ENCODE measurements at regions of chr2 and their contacts with region 1.

Region 1: GRCh38 chr2:216412022-216412999 is at the start of gene SMARCAL1:
- DNase-seq: peak; percentile 93 to 98 (median 97)
- ATAC-seq: peak; percentile 97
- H3K4me3 ChIP-seq: peak within 1 kb of the TSS; percentile 89
- H3K4me3 Mint-ChIP-seq: peak within 1 kb of the TSS; percentile 85 to 99 (median 98)
- H3K27ac ChIP-seq: peak within 1 kb of the TSS; percentile 83
- H3K27ac Mint-ChIP-seq: peak within 1 kb of the TSS; percentile 86 to 97 (median 94)
- H3K4me1 ChIP-seq: peaks cover 0 to 7% of the 10 kb centered on the region in 2 donors
- H3K4me1 Mint-ChIP-seq: peaks cover 6 to 28% (median 23%) of the 10 kb centered on the region in 7 donors
- H3K27me3 ChIP-seq: no peaks in the 10 kb centered on the region
- H3K27me3 Mint-ChIP-seq: peaks cover 0 to 14% (median 3%) of the 10 kb centered on the region in 5 donors
- total RNA-seq, gene SMARCAL1: 16.2 to 30.3 (median 24.6) TPM

Region 2: GRCh38 chr2:215311625-215312396 is 1100.5 kb before region 1 on chr2 and contains the start of gene ATIC:
- CTCF ChIA-PET with region 1: no interaction called
- POLR2A ChIA-PET with region 1: no interaction called
- intact Hi-C with region 1: loop called (anchors 1 kb)
- DNase-seq: peak; percentile 67 to 92 (median 83)
- ATAC-seq: peak; percentile 98
- H3K4me3 ChIP-seq: peak within 1 kb of the TSS; percentile 98
- H3K4me3 Mint-ChIP-seq: peak within 1 kb of the TSS; percentile 86 to 95 (median 93)
- H3K27ac ChIP-seq: peak within 1 kb of the TSS; percentile 74
- H3K27ac Mint-ChIP-seq: peak within 1 kb of the TSS; percentile 84 to 97 (median 92)
- H3K4me1 ChIP-seq: peaks cover 13 to 16% of the 10 kb centered on the region in 2 donors
- H3K4me1 Mint-ChIP-seq: peaks cover 11 to 42% (median 37%) of the 10 kb centered on the region in 7 donors
- H3K27me3 ChIP-seq: no peaks in the 10 kb centered on the region
- H3K27me3 Mint-ChIP-seq: peaks cover 0 to 2% (median 0%) of the 10 kb centered on the region in 5 donors
- total RNA-seq, gene ATIC: 62.1 to 170 (median 83.2) TPM

Region 3: GRCh38 chr2:216057688-216058193 is 354.6 kb before region 1 on chr2:
- CTCF ChIA-PET with region 1: no interaction called
- POLR2A ChIA-PET with region 1: no interaction called
- intact Hi-C with region 1: loop called in 1 of 2 experiments (anchors 1 kb)
- DNase-seq: peak in 8 of 9 donors; percentile 48 to 76 (median 67)
- ATAC-seq: peak; percentile 96
- H3K4me3 ChIP-seq: peak overlapping the region; percentile 49
- H3K4me3 Mint-ChIP-seq: peak overlapping the region; percentile 63 to 87 (median 84)
- H3K27ac ChIP-seq: peak overlapping the region; percentile 83
- H3K27ac Mint-ChIP-seq: peak overlapping the region; percentile 94 to 100 (median 98)
- H3K4me1 ChIP-seq: peaks cover 16 to 22% of the 10 kb centered on the region in 2 donors
- H3K4me1 Mint-ChIP-seq: peaks cover 8 to 42% (median 37%) of the 10 kb centered on the region in 7 donors
- H3K27me3 ChIP-seq: no peaks in the 10 kb centered on the region
- H3K27me3 Mint-ChIP-seq: no peaks in the 10 kb centered on the region

Region 4: DNA sequence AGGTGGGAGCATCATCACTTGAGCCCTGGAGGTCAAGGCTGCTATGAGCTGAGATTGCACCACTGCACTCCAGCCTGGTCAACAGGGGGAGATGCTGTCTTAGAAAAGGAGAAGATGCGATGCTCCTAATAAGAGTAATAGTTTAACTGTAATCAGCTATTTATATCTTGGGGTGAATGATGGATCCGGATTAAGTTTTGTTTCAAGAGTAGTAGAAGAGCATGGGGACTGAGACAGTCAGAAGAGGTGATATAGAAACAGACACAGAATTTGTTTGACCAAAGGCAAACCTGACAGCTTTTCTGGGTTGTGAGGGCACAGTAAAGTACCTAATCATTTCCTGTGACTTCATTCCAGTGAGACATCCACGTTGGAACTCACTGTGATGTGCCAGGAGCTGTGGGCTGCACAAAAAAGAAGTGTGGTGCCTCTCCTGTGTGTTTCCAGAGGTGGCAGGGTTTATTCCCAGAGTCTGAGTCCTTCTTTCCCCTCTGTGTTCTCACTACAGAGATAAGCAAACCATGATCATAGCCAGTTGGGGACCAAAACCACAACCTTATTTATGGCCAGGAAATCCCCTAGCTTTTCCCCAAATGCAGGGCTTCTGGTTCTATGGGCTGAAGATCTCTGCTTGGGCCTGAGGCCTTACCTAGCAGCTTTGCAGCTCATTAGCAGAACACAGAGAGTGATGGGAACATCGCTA is 189.5 kb before region 1 on chr2:
- CTCF ChIA-PET with region 1: interaction called, 3 read pairs
- POLR2A ChIA-PET with region 1: no interaction called
- intact Hi-C with region 1: loop called in 1 of 2 experiments (anchors 5 kb)
- DNase-seq: peak in 1 of 9 donors; percentile 19
- ATAC-seq: peak; percentile 41
- H3K4me3 ChIP-seq: no peak overlapping the region
- H3K4me3 Mint-ChIP-seq: peak overlapping the region in 1 of 10 donors; percentile 15
- H3K27ac ChIP-seq: no peak overlapping the region
- H3K27ac Mint-ChIP-seq: peak overlapping the region in 2 of 9 donors; percentile 36 to 80
- H3K4me1 ChIP-seq: peaks cover 0 to 8% of the 10 kb centered on the region in 2 donors
- H3K4me1 Mint-ChIP-seq: peaks cover 7 to 41% (median 22%) of the 10 kb centered on the region in 7 donors
- H3K27me3 ChIP-seq: no peaks in the 10 kb centered on the region
- H3K27me3 Mint-ChIP-seq: no peaks in the 10 kb centered on the region

Region 5: DNA sequence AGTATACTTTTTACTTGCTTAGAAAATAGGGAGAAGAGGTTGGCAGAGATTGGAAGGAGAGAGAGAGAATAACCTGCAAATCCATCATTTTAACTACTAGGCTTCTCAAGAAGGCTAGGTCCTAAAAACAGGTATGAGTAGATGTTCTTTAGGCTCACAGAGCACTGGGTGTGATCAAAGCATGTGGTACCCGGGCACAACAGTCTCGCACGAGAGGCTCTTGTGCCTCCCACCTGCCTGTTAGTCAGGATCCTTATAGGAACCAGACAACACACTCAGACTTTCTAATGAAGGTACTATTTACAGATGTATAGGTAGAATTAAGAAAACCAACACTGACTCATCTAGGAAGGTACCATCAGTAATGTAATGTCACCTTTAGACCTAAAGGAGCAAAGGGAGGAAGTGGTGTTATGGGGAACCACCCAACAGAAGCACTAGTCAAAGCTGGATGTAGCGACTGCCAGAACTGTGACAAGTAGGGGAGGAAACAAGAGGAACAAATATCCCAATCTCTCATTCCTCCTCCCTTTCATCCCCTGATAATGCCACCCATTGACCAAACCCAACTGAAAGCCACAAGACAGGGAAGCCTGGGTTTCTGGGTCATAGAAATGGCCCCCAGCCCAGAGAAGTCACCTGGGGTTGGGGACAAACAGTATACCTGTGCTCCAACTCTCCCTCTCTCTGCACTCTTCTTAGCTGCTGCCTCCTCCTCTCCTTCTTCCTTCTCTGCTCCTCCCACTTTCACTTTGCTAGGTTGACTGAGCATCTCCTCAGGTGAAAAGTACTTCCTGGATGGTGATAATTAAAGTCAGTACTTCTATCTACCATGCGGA is 24.0 kb before region 1 on chr2:
- CTCF ChIA-PET with region 1: no interaction called
- POLR2A ChIA-PET with region 1: no interaction called
- intact Hi-C with region 1: loop called in 1 of 2 experiments (anchors 1 kb)
- DNase-seq: peak in 6 of 9 donors; percentile 14 to 65 (median 48)
- ATAC-seq: peak; percentile 88
- H3K4me3 ChIP-seq: no peak overlapping the region
- H3K4me3 Mint-ChIP-seq: peak overlapping the region in 6 of 10 donors; percentile 23 to 75 (median 58)
- H3K27ac ChIP-seq: no peak overlapping the region
- H3K27ac Mint-ChIP-seq: peak overlapping the region in 8 of 9 donors; percentile 8 to 94 (median 63)
- H3K4me1 ChIP-seq: peaks cover 0 to 13% of the 10 kb centered on the region in 2 donors
- H3K4me1 Mint-ChIP-seq: peaks cover 12 to 19% (median 18%) of the 10 kb centered on the region in 7 donors
- H3K27me3 ChIP-seq: no peaks in the 10 kb centered on the region
- H3K27me3 Mint-ChIP-seq: peaks cover 0 to under 1% (median 0%) of the 10 kb centered on the region in 5 donors

Region 6: GRCh38 chr2:216426938-216427337 is 14.6 kb after region 1 on chr2:
- CTCF ChIA-PET with region 1: no interaction called
- POLR2A ChIA-PET with region 1: no interaction called
- intact Hi-C with region 1: no loop called
- DNase-seq: no peak
- ATAC-seq: no peak
- H3K4me3 ChIP-seq: no peak overlapping the region
- H3K4me3 Mint-ChIP-seq: no peak overlapping the region
- H3K27ac ChIP-seq: no peak overlapping the region
- H3K27ac Mint-ChIP-seq: peak overlapping the region in 1 of 9 donors; percentile 72
- H3K4me1 ChIP-seq: no peaks in the 10 kb centered on the region
- H3K4me1 Mint-ChIP-seq: peaks cover 0 to 13% (median 4%) of the 10 kb centered on the region in 7 donors
- H3K27me3 ChIP-seq: no peaks in the 10 kb centered on the region
- H3K27me3 Mint-ChIP-seq: no peaks in the 10 kb centered on the region

Region 7: GRCh38 chr2:216507220-216508160 is 95.2 kb after region 1 on chr2:
- CTCF ChIA-PET with region 1: no interaction called
- POLR2A ChIA-PET with region 1: no interaction called
- intact Hi-C with region 1: no loop called
- DNase-seq: no peak
- ATAC-seq: no peak
- H3K4me3 ChIP-seq: no peak overlapping the region
- H3K4me3 Mint-ChIP-seq: no peak overlapping the region
- H3K27ac ChIP-seq: no peak overlapping the region
- H3K27ac Mint-ChIP-seq: peak overlapping the region in 1 of 9 donors; percentile 57
- H3K4me1 ChIP-seq: no peaks in the 10 kb centered on the region
- H3K4me1 Mint-ChIP-seq: peaks cover 4 to 18% (median 11%) of the 10 kb centered on the region in 7 donors
- H3K27me3 ChIP-seq: no peaks in the 10 kb centered on the region
- H3K27me3 Mint-ChIP-seq: no peaks in the 10 kb centered on the region

Region 8: DNA sequence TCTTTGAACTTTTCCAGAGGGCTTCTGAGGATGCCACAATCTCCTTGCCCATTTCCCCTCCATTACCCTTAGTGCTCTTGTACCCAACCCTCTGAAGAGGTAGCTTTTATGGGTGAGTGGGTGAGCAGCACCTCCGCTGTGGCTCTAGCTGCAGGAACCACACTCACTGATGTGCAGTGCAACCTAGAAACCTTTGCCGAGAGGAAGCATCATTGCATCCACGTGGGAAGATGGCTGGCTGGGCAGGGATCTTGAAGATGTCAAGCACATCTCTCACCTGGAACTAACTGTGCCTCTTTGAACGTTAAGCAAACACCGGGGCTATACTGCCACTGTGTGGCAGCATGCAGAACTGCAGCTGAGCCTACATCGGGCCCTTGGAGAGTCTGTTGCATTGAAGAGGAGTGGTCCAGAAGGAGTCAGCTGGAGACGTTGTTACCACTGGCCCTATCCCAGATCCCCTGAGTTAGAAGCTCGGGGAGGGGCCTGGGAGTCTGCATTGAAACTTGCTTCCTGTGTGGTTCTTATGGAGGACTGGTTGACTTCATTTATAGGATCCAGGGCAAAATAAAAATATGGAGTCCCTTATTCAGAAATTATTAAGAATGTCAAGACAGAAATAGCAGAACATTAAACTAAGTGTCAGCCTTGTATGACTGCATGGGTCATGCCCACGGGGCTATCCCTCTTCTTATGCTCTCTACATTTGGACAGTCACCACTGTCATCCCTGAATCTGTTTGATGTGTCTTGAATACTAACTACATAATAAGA is 254.3 kb after region 1 on chr2:
- CTCF ChIA-PET with region 1: no interaction called
- POLR2A ChIA-PET with region 1: no interaction called
- intact Hi-C with region 1: no loop called
- DNase-seq: peak; percentile 36 to 75 (median 62)
- ATAC-seq: peak; percentile 88
- H3K4me3 ChIP-seq: no peak overlapping the region
- H3K4me3 Mint-ChIP-seq: no peak overlapping the region
- H3K27ac ChIP-seq: no peak overlapping the region
- H3K27ac Mint-ChIP-seq: no peak overlapping the region
- H3K4me1 ChIP-seq: no peaks in the 10 kb centered on the region
- H3K4me1 Mint-ChIP-seq: peaks cover 0 to 2% (median 0%) of the 10 kb centered on the region in 7 donors
- H3K27me3 ChIP-seq: no peaks in the 10 kb centered on the region
- H3K27me3 Mint-ChIP-seq: peaks cover 0 to 12% (median 10%) of the 10 kb centered on the region in 5 donors

Measured in naive thymus-derived CD4-positive, alpha-beta T cell (primary cell).